ENCODE measurements at regions of chr7 and their contacts with region 1.

Region 1: DNA sequence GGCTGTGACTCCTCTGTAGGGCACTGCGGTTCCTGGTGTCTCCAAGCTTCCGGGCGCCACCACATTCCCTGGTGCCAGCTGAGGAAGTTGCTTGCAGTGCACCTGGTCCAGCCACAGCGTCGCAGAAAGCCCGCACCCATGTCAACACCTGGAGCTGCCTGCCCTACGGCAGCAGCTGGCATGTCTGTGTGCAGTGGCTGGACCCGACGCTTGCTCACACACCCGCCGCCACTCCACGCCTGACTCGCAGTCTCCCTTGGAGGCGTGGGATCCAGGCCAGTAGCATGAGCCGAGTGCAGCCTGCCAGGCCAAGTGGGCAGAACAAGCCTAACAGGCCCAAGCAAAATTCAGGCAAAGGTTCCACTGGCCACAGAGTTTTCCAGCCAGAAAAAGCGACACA is 118.1 kb upstream of the PHF14 start:
- DNase-seq: no peak
- ATAC-seq: no peak
- H3K4me3 ChIP-seq: no peak overlapping the region
- H3K27ac ChIP-seq: no peak overlapping the region
- H3K4me1 ChIP-seq: no peaks in the 10 kb centered on the region
- H3K27me3 ChIP-seq: no peaks in the 10 kb centered on the region; a peak in 1 of 4 replicates
- CTCF ChIP-seq: no peak
- EP300 ChIP-seq: no peak
- POLR2A ChIP-seq: no peak
- RAD21 ChIP-seq: no peak

Region 2: GRCh38 chr7:10266976-10267375 is 588.6 kb before region 1 on chr7:
- CTCF ChIA-PET with region 1: no interaction called
- POLR2A ChIA-PET with region 1: no interaction called
- RAD21 ChIA-PET with region 1: no interaction called
- SMC1A ChIA-PET with region 1: no interaction called
- in situ Hi-C with region 1: no loop called
- intact Hi-C with region 1: no loop called
- DNase-seq: no peak
- ATAC-seq: no peak
- H3K4me3 ChIP-seq: no peak overlapping the region
- H3K27ac ChIP-seq: no peak overlapping the region
- H3K4me1 ChIP-seq: no peaks in the 10 kb centered on the region
- H3K27me3 ChIP-seq: no peaks in the 10 kb centered on the region
- CTCF ChIP-seq: no peak
- EP300 ChIP-seq: no peak
- POLR2A ChIP-seq: no peak
- RAD21 ChIP-seq: no peak

Region 3: DNA sequence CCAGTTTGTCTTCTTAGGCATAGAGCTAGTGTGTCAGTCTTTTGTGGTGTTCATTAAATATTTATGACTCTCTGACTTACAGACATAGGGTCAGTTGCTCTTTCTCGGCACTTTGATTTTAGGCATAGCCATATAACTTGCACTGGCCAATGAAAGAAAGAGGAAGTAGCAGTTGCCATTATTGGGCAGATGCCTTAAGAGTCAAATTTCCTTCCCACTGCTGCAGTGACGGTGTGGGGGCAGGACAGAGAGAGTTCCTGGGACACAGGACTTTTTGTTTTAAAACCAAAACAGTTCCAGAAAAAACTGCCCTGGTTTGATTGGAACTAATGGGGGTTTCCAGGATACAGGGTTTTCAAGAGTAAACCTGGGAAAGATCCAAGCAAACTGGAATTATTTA is 57.9 kb after region 1 on chr7:
- CTCF ChIA-PET with region 1: no interaction called
- POLR2A ChIA-PET with region 1: no interaction called
- RAD21 ChIA-PET with region 1: no interaction called
- SMC1A ChIA-PET with region 1: no interaction called
- in situ Hi-C with region 1: no loop called
- intact Hi-C with region 1: loop called (anchors 10 kb)
- DNase-seq: no peak
- ATAC-seq: no peak
- H3K4me3 ChIP-seq: no peak overlapping the region
- H3K27ac ChIP-seq: no peak overlapping the region
- H3K4me1 ChIP-seq: no peaks in the 10 kb centered on the region
- H3K27me3 ChIP-seq: no peaks in the 10 kb centered on the region; a peak in 1 of 4 replicates
- CTCF ChIP-seq: no peak
- EP300 ChIP-seq: no peak
- POLR2A ChIP-seq: no peak
- RAD21 ChIP-seq: no peak